ENCODE measurements at regions of chr18 and their contacts with region 1.

Region 1: DNA sequence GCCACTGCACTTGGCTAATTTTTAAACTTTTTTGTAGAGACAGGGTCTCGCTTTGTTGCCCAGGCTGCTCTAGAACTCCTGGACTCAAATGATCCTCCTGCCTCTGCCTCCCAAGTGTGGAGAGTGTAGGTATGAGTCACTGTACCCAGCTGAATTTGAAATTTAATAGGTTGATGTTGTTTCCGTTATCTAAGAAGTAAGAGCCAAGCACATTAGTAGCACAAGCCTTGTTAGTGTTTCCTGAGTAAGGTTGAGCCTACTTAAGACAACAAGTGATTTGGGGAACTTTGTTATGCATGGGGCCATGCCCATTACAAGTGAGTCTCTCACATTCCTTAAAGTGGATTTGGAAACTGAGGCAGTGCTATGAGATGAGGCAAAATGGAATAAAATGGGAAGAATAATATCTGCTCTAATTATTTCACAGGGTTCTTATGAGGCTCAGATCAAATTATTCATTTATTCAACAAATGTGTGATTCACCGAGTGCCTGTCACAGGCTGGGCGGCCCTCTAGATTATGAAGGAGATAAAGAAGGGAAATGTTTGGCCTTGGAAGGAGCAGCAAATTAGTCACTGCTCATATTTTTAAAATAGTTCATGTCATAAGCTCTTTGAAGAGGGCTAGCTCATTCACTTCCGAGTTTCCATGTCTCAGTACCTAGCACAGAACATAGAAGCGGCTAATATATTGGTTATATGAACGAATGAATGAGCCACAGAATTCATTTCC is 217.2 kb downstream of the LDLRAD4 start:
- DNase-seq: no peak
- H3K4me3 Mint-ChIP-seq: no peak overlapping the region
- H3K27ac Mint-ChIP-seq: peak overlapping the region; percentile 54
- H3K4me1 Mint-ChIP-seq: peaks cover 56% of the 10 kb centered on the region
- H3K27me3 Mint-ChIP-seq: no peaks in the 10 kb centered on the region

Region 2: DNA sequence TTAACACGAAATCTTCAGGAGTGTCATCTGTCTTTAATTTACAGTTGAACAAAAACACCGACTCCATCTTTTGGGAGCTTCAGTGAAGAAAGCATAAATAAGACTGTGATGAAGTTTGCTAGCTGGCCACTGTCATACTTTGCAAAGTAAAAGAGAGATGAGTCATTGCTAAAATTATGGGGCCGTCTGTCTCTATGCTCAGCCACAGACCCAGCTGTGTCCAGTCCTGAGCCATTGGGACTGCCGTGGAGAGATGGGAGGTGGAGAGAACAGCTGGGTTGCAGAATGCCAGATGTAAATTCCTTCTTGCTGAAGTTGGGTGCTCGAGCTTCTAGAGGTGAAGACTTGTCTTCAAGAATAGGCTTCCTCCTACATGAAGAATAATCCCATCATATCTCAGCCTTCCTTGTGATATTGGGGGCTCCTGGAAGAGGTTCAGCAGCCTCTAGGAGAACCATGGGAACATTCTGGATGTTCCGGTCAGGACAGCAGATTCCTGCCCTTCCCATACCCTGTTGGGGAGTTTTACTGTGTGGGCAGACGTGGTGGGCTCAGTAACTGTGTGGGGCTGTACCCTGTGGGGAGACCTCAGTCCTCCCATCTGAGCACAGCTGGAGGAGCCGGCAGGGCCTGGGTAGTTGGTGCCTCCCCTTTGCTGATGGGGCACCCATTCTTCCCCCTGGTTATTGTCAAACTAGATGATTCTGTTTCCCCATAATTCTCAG is 146.1 kb before region 1 on chr18:
- intact Hi-C with region 1: loop called (anchors 5 kb)
- DNase-seq: no peak
- H3K4me3 Mint-ChIP-seq: no peak overlapping the region
- H3K27ac Mint-ChIP-seq: peak overlapping the region; percentile 64
- H3K4me1 Mint-ChIP-seq: peaks cover 55% of the 10 kb centered on the region
- H3K27me3 Mint-ChIP-seq: no peaks in the 10 kb centered on the region

Region 3: GRCh38 chr18:13464432-13465123 is 28.8 kb after region 1 on chr18:
- intact Hi-C with region 1: loop called (anchors 2 kb)
- DNase-seq: peak; percentile 62
- H3K4me3 Mint-ChIP-seq: peak overlapping the region; percentile 94
- H3K27ac Mint-ChIP-seq: peak overlapping the region; percentile 92
- H3K4me1 Mint-ChIP-seq: peaks cover 39% of the 10 kb centered on the region
- H3K27me3 Mint-ChIP-seq: no peaks in the 10 kb centered on the region